ENCODE measurements at regions of chr6 and their contacts with region 1.

Region 1: GRCh38 chr6:44312901-44313788 is at the start of gene AARS2:
- DNase-seq: peak; percentile 91
- CTCF ChIP-seq: peak; percentile 95

Region 2: DNA sequence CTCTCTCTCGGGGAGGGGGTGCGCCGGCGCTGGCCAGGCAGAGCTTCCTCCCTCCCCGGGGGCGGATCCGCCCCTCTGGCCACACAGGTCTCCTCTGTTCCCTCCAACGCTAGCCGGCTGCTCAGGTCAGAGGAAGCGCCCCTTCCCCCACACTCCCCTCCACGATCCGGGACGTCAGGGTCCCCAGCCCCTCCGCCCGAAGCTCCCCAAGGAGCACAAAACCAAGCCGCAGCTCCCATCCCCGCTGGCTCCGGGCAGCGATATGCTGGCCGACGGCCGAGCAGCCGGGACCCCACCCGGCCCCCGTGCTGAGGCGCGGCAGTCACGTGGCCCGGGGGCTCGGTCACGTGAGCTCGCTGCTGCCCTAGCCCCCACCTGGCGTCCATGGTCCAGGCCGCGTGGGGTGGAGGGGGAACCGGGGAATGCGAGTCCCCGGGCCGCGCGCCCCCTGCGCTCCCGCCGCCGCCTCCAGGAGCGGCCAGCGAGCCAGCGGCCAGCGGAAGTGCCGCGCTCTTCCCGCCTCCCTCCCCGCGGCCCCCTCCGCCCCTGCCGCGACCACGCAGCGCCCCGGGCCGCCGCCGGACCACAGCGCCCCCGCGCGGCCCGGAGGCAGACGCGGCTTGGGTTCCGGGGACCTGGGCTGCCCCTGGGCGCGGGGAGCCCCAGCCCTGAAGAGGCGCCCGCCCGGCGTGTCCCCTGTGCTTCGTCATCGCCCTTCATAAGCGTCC is 56.0 kb before region 1 on chr6 and contains the start of gene SLC35B2:
- CTCF ChIA-PET with region 1: interaction called, 12 read pairs
- POLR2A ChIA-PET with region 1: no interaction called
- DNase-seq: peak; percentile 79
- CTCF ChIP-seq: peak; percentile 89

Region 3: DNA sequence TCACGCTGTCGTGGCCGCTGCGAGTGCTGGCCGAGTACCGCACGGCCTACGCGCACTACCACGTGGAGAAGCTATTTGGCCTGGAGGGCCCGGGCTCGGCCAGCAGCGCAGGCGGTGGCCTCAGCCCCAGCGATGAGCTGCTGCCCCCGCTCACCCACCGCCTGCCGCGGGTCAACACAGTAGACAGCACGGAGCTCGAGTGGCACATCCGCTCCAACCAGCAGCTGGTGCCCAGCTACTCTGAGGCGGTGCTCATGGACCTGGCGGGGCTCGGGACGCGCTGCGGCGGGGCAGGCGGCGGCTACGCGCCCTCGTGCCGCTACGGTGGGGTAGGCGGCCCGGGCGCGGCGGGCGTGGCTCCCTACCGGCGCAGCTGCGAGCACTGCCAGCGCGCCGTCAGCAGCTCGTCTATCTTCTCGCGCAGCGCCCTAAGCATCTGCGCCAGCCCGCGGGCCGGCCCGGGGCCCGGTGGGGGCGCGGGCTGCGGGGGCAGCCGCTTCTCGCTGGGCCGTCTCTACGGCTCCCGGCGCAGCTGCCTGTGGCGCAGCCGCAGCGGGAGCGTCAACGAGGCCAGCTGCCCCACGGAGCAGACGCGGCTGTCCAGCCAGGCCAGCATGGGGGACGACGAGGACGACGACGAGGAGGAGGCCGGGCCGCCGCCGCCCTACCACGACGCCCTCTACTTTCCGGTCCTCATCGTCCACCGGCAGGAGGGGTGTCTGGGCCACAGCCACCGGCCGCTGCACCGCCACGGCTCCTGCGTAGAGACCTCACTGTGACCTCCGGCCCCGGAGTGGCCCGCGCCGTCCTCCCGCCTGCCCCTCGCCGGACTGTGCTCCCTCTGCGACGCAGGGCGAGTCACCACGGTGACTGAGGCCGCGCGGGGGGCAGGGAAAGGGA is 37.1 kb before region 1 on chr6:
- CTCF ChIA-PET with region 1: interaction called, 182 read pairs
- POLR2A ChIA-PET with region 1: no interaction called
- DNase-seq: no peak
- CTCF ChIP-seq: no peak

Region 4: GRCh38 chr6:44291841-44292240 is 21.3 kb before region 1 on chr6:
- CTCF ChIA-PET with region 1: interaction called, 34 read pairs
- POLR2A ChIA-PET with region 1: no interaction called
- DNase-seq: no peak
- CTCF ChIP-seq: no peak

Region 5: DNA sequence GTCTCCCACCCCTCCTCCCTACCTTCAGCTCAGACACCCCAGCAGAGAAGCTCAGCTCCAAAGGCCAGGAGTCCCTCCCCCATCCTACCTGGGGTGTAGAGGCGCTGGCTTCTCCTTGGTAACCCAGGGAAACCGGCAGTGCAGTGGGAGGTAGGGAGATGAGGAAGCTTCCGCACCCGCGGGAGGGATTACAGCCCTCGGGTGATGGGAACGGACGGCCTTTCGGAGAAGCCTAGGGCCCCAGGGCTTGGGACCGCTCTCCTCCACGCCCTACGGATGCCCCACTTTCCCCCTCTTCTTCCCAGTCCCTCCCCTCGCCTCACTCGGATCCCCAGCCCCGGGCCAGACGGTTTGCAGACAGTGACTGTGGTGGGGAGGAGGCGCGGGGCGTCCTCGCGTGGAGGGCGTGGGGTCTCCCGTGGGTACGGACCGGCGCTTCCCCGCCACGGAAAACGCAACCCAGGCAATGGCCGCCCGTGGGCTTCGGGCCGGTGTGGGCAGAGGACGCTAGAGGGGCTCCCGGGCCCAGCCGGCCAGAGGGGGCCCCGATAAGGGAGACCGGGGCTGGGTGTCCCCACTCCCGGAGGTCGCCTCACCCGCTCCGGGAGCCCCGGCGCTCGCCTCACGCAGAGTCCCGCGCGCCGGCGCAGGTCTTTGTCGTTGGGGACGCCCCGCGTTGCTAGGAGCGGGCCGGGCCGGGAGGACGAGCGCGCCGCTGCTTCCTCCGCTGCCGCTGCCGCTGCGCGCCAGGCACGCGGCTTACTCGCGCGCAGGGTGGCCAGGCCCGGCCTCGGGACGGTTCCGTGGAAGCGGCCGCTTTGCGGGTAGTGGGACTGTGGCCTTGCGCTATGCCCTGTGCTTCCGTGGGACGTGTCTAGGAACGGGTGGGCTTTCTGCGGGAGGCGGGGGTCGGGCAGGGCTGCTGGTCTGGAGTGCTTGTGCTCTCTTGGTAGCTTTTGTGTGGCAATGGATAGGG is 15.8 kb before region 1 on chr6:
- CTCF ChIA-PET with region 1: interaction called, 45 read pairs
- POLR2A ChIA-PET with region 1: interaction called, 3 read pairs
- DNase-seq: peak; percentile 41
- CTCF ChIP-seq: no peak

Region 6: DNA sequence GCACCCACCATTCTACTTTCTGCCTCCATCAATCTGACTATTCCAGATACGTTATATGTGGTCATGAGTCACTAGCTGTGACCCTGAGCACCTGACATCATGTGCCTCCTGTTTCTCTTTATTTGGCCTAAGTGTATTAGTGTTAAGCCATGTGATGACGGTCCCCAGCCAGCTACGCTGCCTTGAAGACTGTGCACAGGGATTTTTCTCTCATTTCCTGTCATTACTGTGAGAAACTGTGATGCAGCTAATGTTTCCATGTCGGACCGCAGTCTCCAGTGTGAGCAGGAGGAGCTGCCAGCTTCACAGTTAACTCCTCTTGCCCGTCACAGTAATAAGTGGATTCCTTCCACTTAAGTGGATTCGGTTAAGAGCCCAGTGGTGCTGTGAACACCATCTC is 19.4 kb after region 1 on chr6:
- CTCF ChIA-PET with region 1: interaction called, 31 read pairs
- POLR2A ChIA-PET with region 1: no interaction called
- DNase-seq: no peak
- CTCF ChIP-seq: no peak

Measured in GM10248 (cell line).